PC-9 (cell line): ENCODE measurements at regions of chr20 and their contacts with region 1.

Region 1: DNA sequence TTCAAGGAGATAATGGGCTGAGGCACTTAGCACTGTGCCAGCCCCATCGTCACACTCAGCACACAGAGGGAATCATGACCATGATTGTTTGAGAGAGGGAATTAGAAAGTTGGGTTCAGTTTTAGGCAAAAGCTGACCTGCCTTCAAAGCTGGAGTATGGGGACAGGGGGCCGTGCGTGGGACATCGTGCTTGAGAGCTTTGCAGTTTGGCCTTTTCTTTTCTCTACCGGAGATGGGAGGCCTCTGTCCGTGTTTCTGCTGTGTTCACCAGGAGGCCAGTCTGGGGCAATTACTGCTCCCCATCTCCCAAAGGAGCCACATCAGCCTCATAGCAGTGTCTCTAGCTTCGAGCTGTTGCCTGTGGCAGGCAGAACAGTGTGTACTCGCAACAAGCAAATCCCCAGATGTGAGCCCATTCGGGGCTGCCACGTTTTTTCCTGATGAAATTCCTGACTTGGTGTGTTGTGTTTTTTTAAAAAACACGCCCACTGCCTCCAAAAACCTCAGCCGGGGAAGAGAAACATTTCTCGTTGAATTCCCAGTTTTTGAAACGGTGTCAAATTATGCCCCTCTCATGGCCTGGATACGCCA is 20.2 kb downstream of the EYA2 start:
- DNase-seq: no peak
- H3K4me3 ChIP-seq: no peak overlapping the region
- H3K27ac ChIP-seq: no peak overlapping the region
- H3K4me1 ChIP-seq: no peaks in the 10 kb centered on the region
- H3K27me3 ChIP-seq: peaks cover 43% of the 10 kb centered on the region
- CTCF ChIP-seq: no peak

Region 2: GRCh38 chr20:46767127-46767761 is 147.6 kb before region 1 on chr20:
- CTCF ChIA-PET with region 1: no interaction called
- POLR2A ChIA-PET with region 1: no interaction called
- intact Hi-C with region 1: loop called (anchors 10 kb)
- DNase-seq: peak in 1 of 2 experiments; percentile 35
- H3K4me3 ChIP-seq: no peak overlapping the region
- H3K27ac ChIP-seq: no peak overlapping the region
- H3K4me1 ChIP-seq: 0 out of 2 replicates have a peak, but pooled peaks cover 6% of the 10 kb centered on the region
- H3K27me3 ChIP-seq: no peaks in the 10 kb centered on the region
- CTCF ChIP-seq: peak; percentile 94

Region 3: DNA sequence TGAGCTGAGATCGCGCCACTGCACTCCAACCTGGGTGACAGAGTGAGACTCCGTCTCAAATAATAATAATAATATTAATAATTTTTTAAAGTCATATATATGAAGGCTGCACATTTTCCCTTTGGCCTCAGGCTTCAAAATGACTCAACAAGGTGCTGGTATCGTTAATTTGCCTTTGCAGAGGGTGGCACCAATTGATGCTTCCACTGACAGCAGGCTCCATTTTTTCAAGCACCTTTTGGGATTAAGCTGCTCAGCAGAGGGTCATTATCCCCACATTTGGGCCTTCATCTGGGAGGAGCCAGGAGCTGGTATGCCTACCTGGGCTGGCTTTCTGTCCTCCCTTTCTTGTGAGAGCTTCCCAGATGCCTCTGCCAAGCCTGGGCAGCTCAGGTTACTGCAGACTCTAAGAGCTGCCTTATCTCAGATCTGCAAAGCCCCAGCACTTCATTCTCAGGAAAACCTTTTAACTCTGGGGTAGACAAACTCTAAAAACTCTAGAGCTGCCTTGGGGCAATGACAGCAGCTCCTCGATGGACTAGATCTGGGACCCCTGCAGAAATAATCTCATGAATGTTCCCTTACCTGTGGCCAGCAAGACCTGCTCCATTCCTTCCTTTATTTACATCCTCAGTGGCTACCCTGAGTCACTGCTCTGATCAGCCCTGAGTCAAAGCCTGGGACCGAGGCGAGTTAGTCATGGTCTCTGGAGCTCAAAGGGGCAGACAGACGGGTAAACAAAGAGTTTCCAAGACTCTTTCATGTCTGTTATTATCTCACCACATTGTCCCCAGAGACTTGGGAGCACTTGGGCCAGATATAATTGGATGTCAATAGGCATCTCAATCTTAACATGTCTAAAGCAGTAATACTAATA is 100.3 kb before region 1 on chr20:
- CTCF ChIA-PET with region 1: no interaction called
- POLR2A ChIA-PET with region 1: no interaction called
- intact Hi-C with region 1: no loop called
- DNase-seq: peak; percentile 83 to 97
- H3K4me3 ChIP-seq: peak overlapping the region; percentile 31; the same call in 1 of the 2 replicates
- H3K27ac ChIP-seq: peak overlapping the region; percentile 69
- H3K4me1 ChIP-seq: peaks cover 31% of the 10 kb centered on the region
- H3K27me3 ChIP-seq: no peaks in the 10 kb centered on the region
- CTCF ChIP-seq: no peak

Region 4: GRCh38 chr20:46872328-46873211 is 42.3 kb before region 1 on chr20:
- CTCF ChIA-PET with region 1: no interaction called
- POLR2A ChIA-PET with region 1: no interaction called
- intact Hi-C with region 1: no loop called
- DNase-seq: no peak
- H3K4me3 ChIP-seq: peak overlapping the region; percentile 44; the same call in 1 of the 2 replicates
- H3K27ac ChIP-seq: no peak overlapping the region
- H3K4me1 ChIP-seq: no peaks in the 10 kb centered on the region
- H3K27me3 ChIP-seq: peaks cover 8% of the 10 kb centered on the region; the same call in 1 of the 2 replicates
- CTCF ChIP-seq: no peak

Region 5: GRCh38 chr20:46928580-46929132 is 13.8 kb after region 1 on chr20:
- CTCF ChIA-PET with region 1: no interaction called
- POLR2A ChIA-PET with region 1: no interaction called
- intact Hi-C with region 1: no loop called
- DNase-seq: no peak
- H3K4me3 ChIP-seq: no peak overlapping the region
- H3K27ac ChIP-seq: no peak overlapping the region
- H3K4me1 ChIP-seq: no peaks in the 10 kb centered on the region
- H3K27me3 ChIP-seq: 0 out of 2 replicates have a peak, but pooled peaks cover 6% of the 10 kb centered on the region
- CTCF ChIP-seq: no peak